Endothelial cell of umbilical vein (primary cell): ENCODE measurements at regions of chr22 and their contacts with region 1.

Region 1: GRCh38 chr22:23178512-23179254 is 1.6 kb upstream of the BCR start:
- DNase-seq: peak; percentile 70
- H3K4me3 ChIP-seq: no peak overlapping the region
- H3K27ac ChIP-seq: peak overlapping the region; percentile 19
- H3K4me1 ChIP-seq: peaks cover 19% of the 10 kb centered on the region
- H3K27me3 ChIP-seq: no peaks in the 10 kb centered on the region
- CTCF ChIP-seq: peak; percentile 94 to 96
- POLR2A ChIP-seq: no peak

Region 2: GRCh38 chr22:23113067-23113846 is 65.4 kb before region 1 on chr22:
- CTCF ChIA-PET with region 1: no interaction called
- POLR2A ChIA-PET with region 1: no interaction called
- dilution Hi-C with region 1: no loop called
- intact Hi-C with region 1: no loop called
- DNase-seq: no peak
- H3K4me3 ChIP-seq: no peak overlapping the region
- H3K27ac ChIP-seq: no peak overlapping the region
- H3K4me1 ChIP-seq: no peaks in the 10 kb centered on the region
- H3K27me3 ChIP-seq: no peaks in the 10 kb centered on the region
- CTCF ChIP-seq: no peak
- POLR2A ChIP-seq: no peak

Region 3: DNA sequence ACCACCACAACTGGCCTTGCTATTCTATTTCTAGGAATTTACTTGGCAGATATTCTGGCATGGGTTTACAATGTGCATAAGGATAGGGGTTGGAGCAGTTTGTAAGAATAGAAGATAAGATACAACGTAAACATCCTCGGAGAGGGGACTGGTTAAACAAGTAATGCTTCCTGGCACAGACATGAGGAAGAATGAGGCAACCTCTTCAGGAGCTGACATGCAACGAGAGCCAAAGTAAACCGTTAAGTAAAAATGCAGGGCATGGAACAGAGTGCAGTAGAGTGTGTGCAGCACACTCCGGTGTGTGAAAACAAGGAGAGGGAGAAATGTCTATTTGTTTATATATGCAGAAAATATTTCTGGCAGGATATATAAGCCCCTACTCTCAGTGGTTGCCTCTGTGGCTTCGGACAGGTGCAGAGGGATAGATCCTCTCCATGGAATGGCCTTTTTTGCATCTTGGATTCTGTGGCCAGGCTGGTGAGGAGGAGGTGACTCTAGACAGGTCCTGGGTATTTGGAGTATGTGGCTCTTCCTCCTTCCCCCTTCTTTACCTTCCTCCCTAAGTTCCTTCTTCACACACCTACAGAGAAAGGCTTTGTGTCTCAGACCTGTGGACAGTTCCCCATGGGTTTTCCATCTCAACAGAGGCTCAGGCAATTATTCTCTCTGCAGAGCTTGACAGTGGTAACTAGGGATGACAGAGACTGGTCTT is 30.9 kb before region 1 on chr22:
- CTCF ChIA-PET with region 1: no interaction called
- POLR2A ChIA-PET with region 1: no interaction called
- dilution Hi-C with region 1: no loop called
- intact Hi-C with region 1: no loop called
- DNase-seq: peak; percentile 40
- H3K4me3 ChIP-seq: no peak overlapping the region
- H3K27ac ChIP-seq: no peak overlapping the region
- H3K4me1 ChIP-seq: peaks cover 9% of the 10 kb centered on the region
- H3K27me3 ChIP-seq: no peaks in the 10 kb centered on the region
- CTCF ChIP-seq: no peak
- POLR2A ChIP-seq: no peak

Region 4: GRCh38 chr22:23219822-23220484 is 41.3 kb after region 1 on chr22:
- CTCF ChIA-PET with region 1: interaction called, 41 read pairs
- POLR2A ChIA-PET with region 1: interaction called, 4 read pairs
- dilution Hi-C with region 1: no loop called
- intact Hi-C with region 1: loop called (anchors 1 kb)
- DNase-seq: peak; percentile 73
- H3K4me3 ChIP-seq: no peak overlapping the region
- H3K27ac ChIP-seq: peak overlapping the region; percentile 84
- H3K4me1 ChIP-seq: peaks cover 92% of the 10 kb centered on the region
- H3K27me3 ChIP-seq: no peaks in the 10 kb centered on the region
- CTCF ChIP-seq: no peak
- POLR2A ChIP-seq: no peak

Region 5: DNA sequence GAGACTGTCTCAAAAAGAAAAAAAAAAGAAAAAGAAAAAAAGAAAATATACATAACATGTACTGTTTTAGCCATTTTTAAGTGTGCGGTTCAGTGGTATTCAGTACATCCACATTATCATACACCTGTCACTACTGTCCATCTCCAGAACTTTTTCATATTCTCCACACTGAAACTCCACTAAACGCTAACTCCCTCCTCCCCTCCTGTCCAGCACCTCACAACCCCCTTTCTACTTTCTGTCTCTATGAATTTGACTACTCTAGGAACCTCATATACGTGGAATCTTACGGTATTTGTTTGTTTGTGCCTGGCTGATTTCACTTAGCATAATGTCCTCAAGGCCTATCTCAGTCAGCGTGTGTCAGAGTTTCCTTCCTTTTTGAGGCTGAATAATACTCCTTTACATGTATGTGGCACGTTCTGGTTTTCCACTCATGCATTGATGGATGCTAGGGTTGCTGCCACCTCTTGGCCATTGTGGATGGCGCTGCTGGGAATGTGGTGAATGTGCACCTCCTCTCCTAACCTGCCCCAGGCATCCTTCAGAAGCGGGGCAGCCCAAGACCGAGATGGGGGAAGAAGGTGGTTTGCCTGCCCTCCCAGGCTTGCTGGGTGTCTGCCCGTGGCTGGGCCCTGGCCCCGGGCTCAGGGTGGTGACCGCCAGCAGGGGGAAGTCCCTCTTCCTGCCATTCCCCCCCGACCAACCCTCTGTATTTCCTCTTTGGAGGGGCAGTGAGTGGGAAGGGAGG is 62.1 kb after region 1 on chr22:
- CTCF ChIA-PET with region 1: interaction called, 18 read pairs
- POLR2A ChIA-PET with region 1: no interaction called
- dilution Hi-C with region 1: no loop called
- intact Hi-C with region 1: loop called (anchors 1 kb)
- DNase-seq: peak; percentile 93
- H3K4me3 ChIP-seq: no peak overlapping the region
- H3K27ac ChIP-seq: peak overlapping the region; percentile 70
- H3K4me1 ChIP-seq: peaks cover 28% of the 10 kb centered on the region
- H3K27me3 ChIP-seq: no peaks in the 10 kb centered on the region
- CTCF ChIP-seq: peak; percentile 75 to 77
- POLR2A ChIP-seq: no peak

Region 6: DNA sequence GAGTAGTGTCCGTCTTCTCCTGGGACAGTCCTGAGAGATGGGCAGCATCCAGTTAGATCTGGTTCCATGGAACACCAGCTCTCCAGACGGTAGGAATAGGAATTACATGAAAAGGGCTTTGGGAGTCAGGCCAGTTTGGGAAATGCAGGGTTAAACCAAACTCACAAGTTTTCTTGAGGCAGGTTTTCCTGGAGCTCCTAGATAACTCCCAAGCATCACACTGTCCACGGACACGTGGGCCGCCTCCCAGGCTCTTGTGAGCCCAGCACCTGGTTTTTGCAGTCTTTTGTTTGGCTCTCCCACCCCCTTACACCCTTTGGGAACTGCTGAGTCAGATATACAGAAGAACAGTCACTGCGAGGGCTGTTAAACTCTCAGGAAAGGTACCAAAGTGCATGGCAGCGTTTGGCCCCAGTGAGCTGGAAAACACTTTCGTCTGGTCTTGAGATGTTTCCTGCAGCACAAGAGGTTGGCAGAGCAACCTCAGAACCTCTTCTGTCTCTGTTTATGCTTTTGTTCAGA is 91.6 kb after region 1 on chr22:
- CTCF ChIA-PET with region 1: interaction called, 10 read pairs
- POLR2A ChIA-PET with region 1: no interaction called
- dilution Hi-C with region 1: no loop called
- intact Hi-C with region 1: no loop called
- DNase-seq: no peak
- H3K4me3 ChIP-seq: no peak overlapping the region
- H3K27ac ChIP-seq: no peak overlapping the region
- H3K4me1 ChIP-seq: no peaks in the 10 kb centered on the region
- H3K27me3 ChIP-seq: no peaks in the 10 kb centered on the region
- CTCF ChIP-seq: no peak
- POLR2A ChIP-seq: no peak

Region 7: GRCh38 chr22:23289851-23290724 is 111.4 kb after region 1 on chr22:
- CTCF ChIA-PET with region 1: interaction called, 29 read pairs
- POLR2A ChIA-PET with region 1: no interaction called
- dilution Hi-C with region 1: no loop called
- intact Hi-C with region 1: loop called (anchors 1 kb)
- DNase-seq: peak; percentile 55
- H3K4me3 ChIP-seq: no peak overlapping the region
- H3K27ac ChIP-seq: peak overlapping the region; percentile 7
- H3K4me1 ChIP-seq: peaks cover 5% of the 10 kb centered on the region
- H3K27me3 ChIP-seq: no peaks in the 10 kb centered on the region
- CTCF ChIP-seq: peak; percentile 85 to 90
- POLR2A ChIP-seq: no peak

Region 8: DNA sequence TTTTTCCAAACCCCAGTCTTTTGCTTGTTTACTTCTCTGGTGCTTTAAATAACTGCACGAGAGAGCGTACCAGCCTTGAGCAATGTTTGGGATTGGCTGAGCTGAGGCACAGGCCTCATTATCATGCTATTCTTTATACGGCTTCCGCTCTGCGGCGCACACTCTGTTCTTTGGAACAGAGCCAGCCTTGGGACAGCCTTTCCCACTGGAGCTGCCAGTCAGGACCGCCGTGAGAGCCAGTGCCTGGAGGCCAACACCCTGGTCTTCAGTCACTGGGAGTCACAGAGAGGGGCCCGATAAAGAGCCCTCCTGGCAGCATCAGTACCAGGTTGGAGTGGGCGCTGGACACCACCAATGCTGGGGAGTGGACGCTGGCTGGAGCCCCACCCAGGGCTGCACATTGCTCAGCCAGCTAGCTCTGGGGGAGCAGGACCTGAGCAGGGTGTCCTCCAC is 127.3 kb after region 1 on chr22:
- CTCF ChIA-PET with region 1: interaction called, 13 read pairs
- POLR2A ChIA-PET with region 1: interaction called, 3 read pairs
- dilution Hi-C with region 1: no loop called
- intact Hi-C with region 1: no loop called
- DNase-seq: peak; percentile 96
- H3K4me3 ChIP-seq: peak overlapping the region in 1 of 3 experiments; percentile 1
- H3K27ac ChIP-seq: peak overlapping the region; percentile 96
- H3K4me1 ChIP-seq: peaks cover 69% of the 10 kb centered on the region
- H3K27me3 ChIP-seq: no peaks in the 10 kb centered on the region
- CTCF ChIP-seq: no peak
- POLR2A ChIP-seq: no peak